Activated T-helper 1 cell treated with anti-CD3 and anti-CD28 coated beads, Interleukin-12 subunit alpha, Interleukin-12 subunit beta, Interleukin-2, Interleukin-4 antibody, amounts not matched to agents 30 ng/mL and 10 ng/mL and 1 ng/mL, durations not matched to agents 14 hours and 24 hours and 36 hours (primary cell): ENCODE measurements at regions of chr7 and their contacts with region 1.

Region 1: GRCh38 chr7:158976849-158977593 is 120.7 kb downstream of the DYNC2I1 start:
- DNase-seq: peak; percentile 77
- H3K4me3 Mint-ChIP-seq: peak overlapping the region; percentile 82
- H3K27ac Mint-ChIP-seq: peak overlapping the region; percentile 89
- H3K4me1 Mint-ChIP-seq: peaks cover 20% of the 10 kb centered on the region
- H3K27me3 Mint-ChIP-seq: no peaks in the 10 kb centered on the region

Region 2: DNA sequence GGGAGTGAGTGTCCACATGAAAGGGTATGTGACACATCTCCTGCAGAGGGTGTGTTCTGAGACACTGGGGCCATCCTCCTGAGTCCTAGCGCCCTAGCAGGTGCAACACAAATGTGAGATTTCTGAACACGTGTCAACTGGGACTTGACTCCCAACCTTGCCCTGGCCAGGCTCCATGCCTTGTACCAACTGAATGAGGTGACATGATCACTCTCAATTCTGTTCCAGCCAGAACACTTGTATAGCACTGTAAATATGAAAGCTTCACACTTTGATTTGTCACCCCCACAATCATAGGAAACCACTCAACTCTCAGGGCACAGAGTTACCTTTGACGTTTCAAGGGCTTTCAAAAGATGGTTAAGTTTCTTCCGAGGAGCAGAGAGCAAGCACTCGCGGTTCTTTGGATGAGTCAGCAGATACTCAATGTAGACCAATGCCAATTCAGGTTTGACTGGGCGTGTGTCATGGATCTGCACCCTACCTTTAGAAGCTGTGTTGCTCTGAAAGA is 321.0 kb before region 1 on chr7:
- intact Hi-C with region 1: loop called (anchors 1 kb)
- DNase-seq: peak; percentile 68
- H3K4me3 Mint-ChIP-seq: peak overlapping the region; percentile 40
- H3K27ac Mint-ChIP-seq: peak overlapping the region; percentile 82
- H3K4me1 Mint-ChIP-seq: peaks cover 32% of the 10 kb centered on the region
- H3K27me3 Mint-ChIP-seq: no peaks in the 10 kb centered on the region

Region 3: DNA sequence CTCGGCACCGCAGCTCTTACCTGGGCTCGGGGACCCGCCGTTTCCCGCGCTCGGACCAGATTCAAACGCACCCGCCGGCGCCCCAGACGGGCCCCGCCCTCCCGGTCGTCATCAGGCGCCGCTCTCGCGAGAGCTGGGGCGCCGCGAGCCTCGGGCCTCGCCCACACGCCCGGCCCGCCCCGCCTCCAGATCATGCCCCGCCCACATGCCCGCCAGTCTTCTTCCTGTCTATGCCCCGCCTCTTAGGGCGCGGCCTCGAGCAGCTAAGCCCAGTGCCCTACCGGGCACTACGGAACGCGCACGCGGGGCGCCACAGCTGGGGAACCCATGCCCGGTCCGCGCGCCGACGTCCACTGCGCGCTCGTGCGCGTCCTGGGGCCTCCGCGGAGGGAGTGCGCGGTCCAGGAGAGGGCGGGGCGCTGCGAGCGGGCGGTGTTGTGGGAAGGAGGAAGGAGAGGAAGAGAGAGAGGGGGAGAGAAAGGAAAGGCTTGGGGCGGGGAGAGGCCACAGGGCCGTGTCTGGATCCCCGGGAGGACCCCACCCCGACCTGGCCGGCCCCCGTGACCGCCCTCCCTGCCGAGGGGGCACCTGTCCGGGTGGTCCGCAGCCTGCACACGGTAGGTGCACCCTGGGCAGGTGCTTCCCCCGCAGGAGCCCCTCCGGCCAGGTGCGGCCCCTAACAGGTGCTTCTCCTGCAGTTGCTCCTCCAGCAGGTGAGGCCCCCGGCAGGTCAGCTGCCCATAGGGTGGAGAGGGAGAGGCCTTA is 272.1 kb before region 1 on chr7 and contains the start of gene NCAPG2:
- intact Hi-C with region 1: loop called (anchors 1 kb)
- DNase-seq: peak; percentile 94
- H3K4me3 Mint-ChIP-seq: peak within 1 kb of the TSS; percentile 87
- H3K27ac Mint-ChIP-seq: peak within 1 kb of the TSS; percentile 87
- H3K4me1 Mint-ChIP-seq: peaks cover 52% of the 10 kb centered on the region
- H3K27me3 Mint-ChIP-seq: peaks cover 2% of the 10 kb centered on the region
- total RNA-seq, gene NCAPG2: 76.5 and 86.9 TPM in 2 replicates

Region 4: GRCh38 chr7:158824028-158824427 is 153.0 kb before region 1 on chr7:
- intact Hi-C with region 1: loop called (anchors 1 kb)
- DNase-seq: peak; percentile 72
- H3K4me3 Mint-ChIP-seq: peak overlapping the region; percentile 63
- H3K27ac Mint-ChIP-seq: peak overlapping the region; percentile 86
- H3K4me1 Mint-ChIP-seq: peaks cover 67% of the 10 kb centered on the region
- H3K27me3 Mint-ChIP-seq: no peaks in the 10 kb centered on the region

Region 5: DNA sequence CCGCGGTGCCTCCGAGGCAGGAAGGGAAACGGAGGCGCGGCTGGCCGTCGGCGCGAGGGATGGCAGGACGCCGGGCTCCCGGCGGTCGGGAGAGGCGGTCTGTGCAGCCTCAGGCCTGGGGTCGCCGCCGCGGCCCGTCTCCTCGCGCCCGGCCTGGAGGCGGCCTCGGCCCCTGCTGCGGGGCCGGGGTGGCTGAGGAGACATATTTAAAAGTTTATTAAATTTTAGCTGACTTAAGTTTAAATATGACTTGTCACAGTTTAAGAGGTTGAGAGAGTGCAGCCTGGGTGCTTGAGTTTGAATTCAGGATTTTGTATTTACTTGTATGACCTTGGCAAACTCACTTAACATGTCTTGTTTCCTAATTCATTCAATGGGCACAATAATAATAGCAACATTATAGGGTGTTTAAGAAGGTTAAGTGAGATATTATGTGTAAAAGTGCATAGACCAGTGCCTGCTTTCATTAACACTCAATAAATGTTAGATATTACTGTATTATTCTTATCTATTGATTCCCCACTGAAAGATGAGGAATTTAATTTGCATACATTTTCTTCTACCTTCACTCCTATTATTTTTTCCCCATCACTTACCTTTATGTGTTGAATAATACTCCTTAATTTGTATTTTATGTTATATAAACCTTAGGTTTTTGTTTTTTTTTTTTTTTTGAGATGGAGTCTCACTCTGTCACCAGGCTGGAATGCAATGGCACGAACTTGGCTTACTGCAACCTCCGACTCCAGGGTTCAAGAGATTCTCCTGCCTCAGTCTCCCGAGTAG is 119.9 kb before region 1 on chr7:
- intact Hi-C with region 1: loop called (anchors 2 kb)
- DNase-seq: no peak
- H3K4me3 Mint-ChIP-seq: peak overlapping the region; percentile 97
- H3K27ac Mint-ChIP-seq: no peak overlapping the region
- H3K4me1 Mint-ChIP-seq: peaks cover 37% of the 10 kb centered on the region
- H3K27me3 Mint-ChIP-seq: peaks cover 2% of the 10 kb centered on the region